T-cell (primary cell): ENCODE measurements at regions of chr1 and their contacts with region 1.

Region 1: DNA sequence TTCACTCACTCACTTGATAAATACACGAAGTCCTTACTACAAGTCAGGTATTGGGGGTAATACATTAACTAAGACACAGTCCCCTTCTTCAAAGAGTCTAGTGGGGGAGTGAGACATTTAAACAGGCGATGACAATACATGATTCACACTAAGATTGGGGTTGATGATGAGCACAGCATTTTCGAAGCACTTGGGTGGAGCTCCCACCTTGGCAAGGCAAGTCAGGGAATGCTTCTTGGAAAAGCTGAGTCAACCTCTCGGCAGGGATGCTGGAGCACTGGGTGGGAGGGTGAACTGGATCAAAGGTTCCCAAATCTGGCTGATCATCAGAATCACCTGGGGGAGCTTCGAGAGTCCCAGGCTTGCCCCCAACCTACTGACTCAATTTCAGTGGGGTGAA is 57.9 kb upstream of the ENAH start:
- DNase-seq: no peak
- ATAC-seq: no peak
- H3K4me3 ChIP-seq: no peak overlapping the region
- H3K4me3 Mint-ChIP-seq: no peak overlapping the region
- H3K27ac ChIP-seq: no peak overlapping the region
- H3K27ac Mint-ChIP-seq: no peak overlapping the region
- H3K4me1 ChIP-seq: no peaks in the 10 kb centered on the region
- H3K4me1 Mint-ChIP-seq: no peaks in the 10 kb centered on the region
- H3K27me3 ChIP-seq: peaks cover 0 to 8% of the 10 kb centered on the region in 2 experiments
- H3K27me3 Mint-ChIP-seq: no peaks in the 10 kb centered on the region

Region 2: GRCh38 chr1:225720937-225721336 is 10.1 kb after region 1 on chr1:
- CTCF ChIA-PET with region 1: no interaction called
- POLR2A ChIA-PET with region 1: no interaction called
- DNase-seq: no peak
- ATAC-seq: no peak
- H3K4me3 ChIP-seq: no peak overlapping the region
- H3K4me3 Mint-ChIP-seq: no peak overlapping the region
- H3K27ac ChIP-seq: no peak overlapping the region
- H3K27ac Mint-ChIP-seq: no peak overlapping the region
- H3K4me1 ChIP-seq: no peaks in the 10 kb centered on the region
- H3K4me1 Mint-ChIP-seq: no peaks in the 10 kb centered on the region
- H3K27me3 ChIP-seq: no peaks in the 10 kb centered on the region
- H3K27me3 Mint-ChIP-seq: peaks cover 0 to 3% of the 10 kb centered on the region in 2 donors

Region 3: DNA sequence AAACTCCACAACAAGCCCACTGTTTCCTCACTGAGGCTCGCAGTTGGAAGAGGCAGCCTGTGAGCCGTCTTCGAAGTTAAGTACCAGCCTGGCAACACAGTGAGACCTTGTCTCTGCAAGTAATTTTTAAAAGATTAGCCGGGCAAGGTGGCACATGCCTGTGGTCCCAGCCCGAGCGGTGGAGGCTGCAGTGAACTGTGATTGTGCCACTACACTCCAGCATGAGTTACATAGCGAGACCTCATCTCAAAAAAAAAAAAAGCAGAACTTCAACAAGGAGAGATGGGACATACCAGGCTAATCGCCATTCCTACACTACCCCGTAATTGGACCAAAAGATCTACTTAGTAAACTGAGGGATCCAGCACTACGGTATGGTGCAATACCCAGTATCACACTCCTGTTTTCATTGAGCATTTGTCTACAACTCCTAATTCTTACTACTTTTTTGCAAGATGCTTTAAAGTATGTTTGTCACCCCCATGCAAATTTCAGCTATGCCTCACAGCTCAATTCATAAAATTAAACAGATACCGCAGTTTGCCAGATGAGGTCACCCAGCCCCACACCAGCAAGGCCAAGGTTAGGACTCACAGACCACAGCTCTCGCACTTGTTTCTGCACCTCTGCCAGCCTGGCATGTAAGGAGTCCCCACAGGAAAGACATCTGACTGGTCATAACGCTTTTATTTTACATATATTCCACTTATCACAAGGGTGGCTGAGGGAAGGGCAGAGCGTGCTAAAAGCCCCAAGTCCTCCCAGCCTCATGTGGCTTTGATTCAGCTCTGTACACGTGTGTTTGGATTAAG is 267.3 kb after region 1 on chr1:
- CTCF ChIA-PET with region 1: interaction called in 1 of 2 experiments, 13 read pairs
- POLR2A ChIA-PET with region 1: no interaction called
- DNase-seq: peak in 1 of 35 experiments; percentile 19
- ATAC-seq: no peak
- H3K4me3 ChIP-seq: no peak overlapping the region
- H3K4me3 Mint-ChIP-seq: no peak overlapping the region
- H3K27ac ChIP-seq: no peak overlapping the region
- H3K27ac Mint-ChIP-seq: no peak overlapping the region
- H3K4me1 ChIP-seq: peaks cover 0 to 7% of the 10 kb centered on the region in 2 experiments
- H3K4me1 Mint-ChIP-seq: peaks cover 0 to 9% (median 4%) of the 10 kb centered on the region in 3 donors
- H3K27me3 ChIP-seq: no peaks in the 10 kb centered on the region
- H3K27me3 Mint-ChIP-seq: no peaks in the 10 kb centered on the region